ENCODE measurements at regions of chr13 and their contacts with region 1.

Region 1: GRCh38 chr13:65613004-65613403 is 1617.1 kb downstream of the PCDH9 start:
- DNase-seq: no peak
- H3K4me3 Mint-ChIP-seq: no peak overlapping the region
- H3K27ac Mint-ChIP-seq: no peak overlapping the region
- H3K4me1 Mint-ChIP-seq: no peaks in the 10 kb centered on the region
- H3K27me3 Mint-ChIP-seq: no peaks in the 10 kb centered on the region

Region 2: DNA sequence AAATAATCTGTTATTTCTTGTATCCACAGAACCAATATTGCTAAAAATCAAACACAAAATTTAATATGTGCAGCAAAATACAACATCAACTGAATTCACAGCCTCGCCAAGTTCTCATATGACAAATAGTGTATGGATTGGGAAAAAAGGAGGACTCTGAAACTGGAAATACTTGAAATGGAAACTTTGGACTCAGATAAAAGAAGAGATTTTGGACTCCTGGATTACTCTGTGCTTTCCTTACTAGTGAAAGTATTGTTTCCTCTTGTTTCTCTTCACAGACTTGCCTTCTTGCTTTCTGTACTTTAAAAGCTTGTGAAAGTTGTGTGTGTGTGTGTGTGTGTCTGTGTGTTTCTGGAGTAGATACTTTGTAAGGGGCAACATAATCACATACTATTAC is 20.8 kb after region 1 on chr13:
- intact Hi-C with region 1: loop called (anchors 1 kb)
- DNase-seq: no peak
- H3K4me3 Mint-ChIP-seq: no peak overlapping the region
- H3K27ac Mint-ChIP-seq: no peak overlapping the region
- H3K4me1 Mint-ChIP-seq: no peaks in the 10 kb centered on the region
- H3K27me3 Mint-ChIP-seq: no peaks in the 10 kb centered on the region